ENCODE measurements at regions of chr7 and their contacts with region 1.

Region 1: GRCh38 chr7:93055543-93056107 is 62.2 kb downstream of the SAMD9 start:
- DNase-seq: peak; percentile 58
- ATAC-seq: peak; percentile 56
- H3K4me3 ChIP-seq: no peak overlapping the region
- H3K4me3 Mint-ChIP-seq: no peak overlapping the region
- H3K27ac ChIP-seq: no peak overlapping the region
- H3K27ac Mint-ChIP-seq: no peak overlapping the region
- H3K4me1 ChIP-seq: no peaks in the 10 kb centered on the region
- H3K4me1 Mint-ChIP-seq: peaks cover 5% of the 10 kb centered on the region
- H3K27me3 ChIP-seq: peaks cover 0 to under 1% (median 0%) of the 10 kb centered on the region in 4 experiments
- H3K27me3 Mint-ChIP-seq: peaks cover 1% of the 10 kb centered on the region
- CTCF ChIP-seq: peak; percentile 93

Region 2: GRCh38 chr7:91835846-91836368 is 1219.7 kb before region 1 on chr7:
- CTCF ChIA-PET with region 1: no interaction called
- POLR2A ChIA-PET with region 1: no interaction called
- intact Hi-C with region 1: loop called (anchors 5 kb)
- DNase-seq: no peak
- ATAC-seq: no peak
- H3K4me3 ChIP-seq: no peak overlapping the region
- H3K4me3 Mint-ChIP-seq: no peak overlapping the region
- H3K27ac ChIP-seq: no peak overlapping the region
- H3K27ac Mint-ChIP-seq: no peak overlapping the region
- H3K4me1 ChIP-seq: no peaks in the 10 kb centered on the region
- H3K4me1 Mint-ChIP-seq: no peaks in the 10 kb centered on the region
- H3K27me3 ChIP-seq: no peaks in the 10 kb centered on the region
- H3K27me3 Mint-ChIP-seq: no peaks in the 10 kb centered on the region
- CTCF ChIP-seq: no peak

Region 3: DNA sequence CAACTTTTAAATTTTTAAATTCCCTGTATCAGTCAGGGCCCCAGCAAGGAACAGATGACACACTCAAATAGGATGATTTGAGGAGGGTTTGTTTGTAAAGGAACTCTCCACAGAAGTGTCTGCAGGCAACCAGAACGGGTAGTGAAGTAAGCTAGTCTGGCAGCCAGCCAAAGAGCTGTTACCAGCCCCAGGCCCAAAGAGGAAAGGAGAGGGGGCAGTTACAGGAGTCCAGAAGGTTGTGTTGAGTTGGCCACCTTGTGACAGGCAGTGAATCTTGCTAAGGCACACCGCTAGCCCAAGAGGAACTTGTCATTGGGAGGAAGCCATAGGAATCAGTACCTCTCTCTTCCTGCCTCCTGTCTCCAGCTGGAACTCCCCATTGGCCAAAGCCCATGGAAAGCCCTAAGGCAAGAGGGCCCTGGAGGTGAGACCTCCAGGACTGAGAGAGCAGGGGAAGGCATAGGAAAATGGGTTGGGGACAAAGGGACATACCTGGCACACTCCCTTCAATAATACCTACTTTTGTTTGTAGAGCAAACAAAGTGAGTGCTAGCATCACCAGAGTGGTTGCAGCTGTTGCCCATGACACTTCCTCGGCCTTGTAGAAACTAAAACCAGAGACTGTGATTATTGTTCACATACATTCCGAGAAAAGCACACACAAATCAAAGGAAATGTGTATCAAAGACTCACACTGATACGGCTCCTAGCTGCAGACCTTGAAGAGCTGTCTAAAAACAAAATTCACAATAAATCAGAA is 633.8 kb before region 1 on chr7:
- CTCF ChIA-PET with region 1: interaction called, 5 read pairs
- POLR2A ChIA-PET with region 1: no interaction called
- intact Hi-C with region 1: loop called (anchors 1 kb)
- DNase-seq: no peak
- ATAC-seq: no peak
- H3K4me3 ChIP-seq: no peak overlapping the region
- H3K4me3 Mint-ChIP-seq: no peak overlapping the region
- H3K27ac ChIP-seq: no peak overlapping the region
- H3K27ac Mint-ChIP-seq: no peak overlapping the region
- H3K4me1 ChIP-seq: peaks cover 4% of the 10 kb centered on the region in 2 donors
- H3K4me1 Mint-ChIP-seq: peaks cover 10% of the 10 kb centered on the region
- H3K27me3 ChIP-seq: peaks cover 0 to 6% (median 0%) of the 10 kb centered on the region in 4 experiments
- H3K27me3 Mint-ChIP-seq: peaks cover 20% of the 10 kb centered on the region
- CTCF ChIP-seq: no peak

Region 4: GRCh38 chr7:92691578-92691977 is 364.0 kb before region 1 on chr7:
- CTCF ChIA-PET with region 1: no interaction called
- POLR2A ChIA-PET with region 1: no interaction called
- intact Hi-C with region 1: loop called (anchors 2 kb)
- DNase-seq: peak; percentile 60
- ATAC-seq: peak; percentile 66
- H3K4me3 ChIP-seq: no peak overlapping the region
- H3K4me3 Mint-ChIP-seq: no peak overlapping the region
- H3K27ac ChIP-seq: no peak overlapping the region
- H3K27ac Mint-ChIP-seq: no peak overlapping the region
- H3K4me1 ChIP-seq: no peaks in the 10 kb centered on the region
- H3K4me1 Mint-ChIP-seq: peaks cover 6% of the 10 kb centered on the region
- H3K27me3 ChIP-seq: no peaks in the 10 kb centered on the region
- H3K27me3 Mint-ChIP-seq: no peaks in the 10 kb centered on the region
- CTCF ChIP-seq: peak; percentile 74

Measured in B cell (primary cell).